Cardiac septum (tissue), 1 donor: ENCODE measurements at regions of chr4 and their contacts with region 1.

Region 1: GRCh38 chr4:57426779-57427395 is 316.7 kb upstream of the IGFBP7 start:
- DNase-seq: no peak

Region 2: DNA sequence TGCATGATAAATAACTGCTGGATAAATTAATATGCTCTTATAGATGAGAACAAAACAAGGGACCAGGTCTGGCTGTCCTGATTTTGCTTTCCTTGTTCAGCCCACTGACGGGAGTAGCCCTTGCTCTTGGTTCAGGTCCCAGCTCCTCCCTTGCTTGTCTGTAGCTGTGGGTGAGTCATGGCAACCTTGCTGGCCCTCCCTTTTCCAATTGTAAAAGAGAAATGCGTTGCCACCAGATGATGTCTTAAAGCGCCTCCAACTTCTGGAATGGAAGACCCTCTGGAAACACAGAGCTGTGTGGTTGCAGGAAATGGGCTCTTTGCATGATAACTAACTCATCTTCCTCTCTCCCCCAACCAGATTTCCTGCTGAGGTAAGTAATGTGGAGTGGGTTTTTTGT is 1211.0 kb before region 1 on chr4:
- intact Hi-C with region 1: no loop called
- DNase-seq: no peak

Region 3: DNA sequence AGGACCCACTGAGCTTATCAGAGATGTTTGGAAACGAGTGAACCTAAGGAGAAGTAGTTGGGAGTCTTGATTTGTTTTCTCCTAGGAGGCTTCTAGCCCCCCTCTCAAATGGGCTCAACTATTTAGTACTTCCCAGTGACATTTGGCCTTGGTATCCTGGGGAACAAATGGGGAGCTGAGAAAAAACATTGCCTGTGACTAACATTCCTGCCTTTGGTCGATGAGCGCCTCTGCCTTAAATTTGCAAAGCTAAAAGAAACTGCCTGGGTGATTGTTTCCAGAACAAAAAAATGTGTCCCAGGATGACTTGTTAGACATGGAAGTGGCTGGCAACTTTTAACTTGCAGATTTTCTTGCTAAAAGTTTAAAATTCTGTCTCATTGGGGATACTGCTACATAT is 257.9 kb before region 1 on chr4:
- intact Hi-C with region 1: loop called (anchors 5 kb)
- DNase-seq: no peak